Caco-2 (cell line): ENCODE measurements at regions of chr12 and their contacts with region 1.

Region 1: GRCh38 chr12:40946612-40947194 is 241.4 kb upstream of the PDZRN4 start:
- DNase-seq: no peak
- H3K4me3 ChIP-seq: no peak overlapping the region
- H3K4me3 Mint-ChIP-seq: no peak overlapping the region
- H3K27ac Mint-ChIP-seq: no peak overlapping the region
- H3K4me1 ChIP-seq: no peaks in the 10 kb centered on the region
- H3K4me1 Mint-ChIP-seq: no peaks in the 10 kb centered on the region
- H3K27me3 ChIP-seq: no peaks in the 10 kb centered on the region
- H3K27me3 Mint-ChIP-seq: no peaks in the 10 kb centered on the region
- CTCF ChIP-seq: peak; percentile 46 to 58

Region 2: GRCh38 chr12:40819436-40820108 is 127.1 kb before region 1 on chr12:
- CTCF ChIA-PET with region 1: no interaction called
- POLR2A ChIA-PET with region 1: no interaction called
- intact Hi-C with region 1: no loop called
- DNase-seq: peak; percentile 28 to 48
- H3K4me3 ChIP-seq: no peak overlapping the region
- H3K4me3 Mint-ChIP-seq: no peak overlapping the region
- H3K27ac Mint-ChIP-seq: no peak overlapping the region
- H3K4me1 ChIP-seq: no peaks in the 10 kb centered on the region
- H3K4me1 Mint-ChIP-seq: no peaks in the 10 kb centered on the region
- H3K27me3 ChIP-seq: no peaks in the 10 kb centered on the region
- H3K27me3 Mint-ChIP-seq: no peaks in the 10 kb centered on the region
- CTCF ChIP-seq: no peak

Region 3: GRCh38 chr12:40921563-40922163 is 25.0 kb before region 1 on chr12:
- CTCF ChIA-PET with region 1: no interaction called
- POLR2A ChIA-PET with region 1: no interaction called
- intact Hi-C with region 1: no loop called
- DNase-seq: no peak
- H3K4me3 ChIP-seq: no peak overlapping the region
- H3K4me3 Mint-ChIP-seq: no peak overlapping the region
- H3K27ac Mint-ChIP-seq: no peak overlapping the region
- H3K4me1 ChIP-seq: no peaks in the 10 kb centered on the region
- H3K4me1 Mint-ChIP-seq: no peaks in the 10 kb centered on the region
- H3K27me3 ChIP-seq: no peaks in the 10 kb centered on the region
- H3K27me3 Mint-ChIP-seq: peaks cover 9% of the 10 kb centered on the region
- CTCF ChIP-seq: peak; percentile 61 to 67

Region 4: GRCh38 chr12:41264281-41264680 is 317.6 kb after region 1 on chr12:
- CTCF ChIA-PET with region 1: no interaction called
- POLR2A ChIA-PET with region 1: no interaction called
- intact Hi-C with region 1: loop called (anchors 1 kb)
- DNase-seq: no peak
- H3K4me3 ChIP-seq: no peak overlapping the region
- H3K4me3 Mint-ChIP-seq: no peak overlapping the region
- H3K27ac Mint-ChIP-seq: no peak overlapping the region
- H3K4me1 ChIP-seq: no peaks in the 10 kb centered on the region
- H3K4me1 Mint-ChIP-seq: no peaks in the 10 kb centered on the region
- H3K27me3 ChIP-seq: no peaks in the 10 kb centered on the region
- H3K27me3 Mint-ChIP-seq: peaks cover 5% of the 10 kb centered on the region
- CTCF ChIP-seq: peak in 1 of 2 experiments; percentile 40

Region 5: DNA sequence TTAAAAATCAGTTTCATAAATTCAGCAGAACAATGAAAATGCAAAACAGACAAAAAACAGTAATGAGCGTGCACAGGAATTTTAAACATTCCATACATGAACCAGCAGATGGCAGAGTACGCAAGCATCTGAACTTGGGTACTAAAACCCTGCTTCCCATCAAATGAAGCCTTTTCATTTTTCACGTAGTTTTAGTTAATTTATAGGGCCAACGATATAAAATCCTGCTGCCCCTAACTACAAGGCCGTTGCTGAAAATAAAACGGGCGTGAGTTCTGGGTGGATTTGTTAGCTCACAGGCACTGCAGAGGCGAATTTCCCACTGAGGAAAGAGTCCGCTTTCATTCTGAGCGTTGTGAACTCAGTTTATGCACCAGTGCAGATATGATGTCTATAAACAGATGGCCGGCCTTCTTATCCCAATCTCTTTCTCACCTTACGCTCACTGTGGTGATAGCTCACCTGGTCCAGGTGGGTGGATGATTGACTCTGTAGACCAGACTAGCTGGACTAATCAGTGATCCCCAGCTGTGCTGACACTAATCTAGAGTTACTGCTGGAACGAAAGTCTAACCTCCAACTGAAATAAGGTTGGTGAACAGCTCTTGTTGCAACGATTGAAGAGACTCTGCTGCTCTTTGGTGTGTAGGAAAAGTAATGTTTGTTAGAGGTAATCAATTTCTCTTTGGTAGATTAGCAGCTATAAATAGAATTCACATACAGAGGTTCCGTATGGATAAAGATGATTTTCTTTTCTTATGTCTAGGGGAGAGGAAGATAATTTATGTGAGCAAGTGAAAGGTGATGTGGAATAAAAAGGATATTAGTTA is 330.6 kb after region 1 on chr12:
- CTCF ChIA-PET with region 1: no interaction called
- POLR2A ChIA-PET with region 1: no interaction called
- intact Hi-C with region 1: loop called (anchors 5 kb)
- DNase-seq: peak; percentile 35 to 36
- H3K4me3 ChIP-seq: no peak overlapping the region
- H3K4me3 Mint-ChIP-seq: no peak overlapping the region
- H3K27ac Mint-ChIP-seq: no peak overlapping the region
- H3K4me1 ChIP-seq: no peaks in the 10 kb centered on the region
- H3K4me1 Mint-ChIP-seq: no peaks in the 10 kb centered on the region
- H3K27me3 ChIP-seq: no peaks in the 10 kb centered on the region
- H3K27me3 Mint-ChIP-seq: no peaks in the 10 kb centered on the region
- CTCF ChIP-seq: peak; percentile 58 to 73

Region 6: GRCh38 chr12:41663598-41664258 is 717.0 kb after region 1 on chr12:
- CTCF ChIA-PET with region 1: no interaction called
- POLR2A ChIA-PET with region 1: no interaction called
- intact Hi-C with region 1: loop called (anchors 10 kb)
- DNase-seq: peak in 1 of 2 experiments; percentile 25
- H3K4me3 ChIP-seq: no peak overlapping the region
- H3K4me3 Mint-ChIP-seq: no peak overlapping the region
- H3K27ac Mint-ChIP-seq: no peak overlapping the region
- H3K4me1 ChIP-seq: no peaks in the 10 kb centered on the region
- H3K4me1 Mint-ChIP-seq: no peaks in the 10 kb centered on the region
- H3K27me3 ChIP-seq: no peaks in the 10 kb centered on the region
- H3K27me3 Mint-ChIP-seq: no peaks in the 10 kb centered on the region
- CTCF ChIP-seq: peak; percentile 57 to 69